Activated CD4-positive, alpha-beta memory T cell treated with anti-CD3 and anti-CD28 coated beads, Interleukin-2, amount 10 ng/mL, durations not matched to agents 7 days and 5 days (primary cell): ENCODE measurements at regions of chr12 and their contacts with region 1.

Region 1: DNA sequence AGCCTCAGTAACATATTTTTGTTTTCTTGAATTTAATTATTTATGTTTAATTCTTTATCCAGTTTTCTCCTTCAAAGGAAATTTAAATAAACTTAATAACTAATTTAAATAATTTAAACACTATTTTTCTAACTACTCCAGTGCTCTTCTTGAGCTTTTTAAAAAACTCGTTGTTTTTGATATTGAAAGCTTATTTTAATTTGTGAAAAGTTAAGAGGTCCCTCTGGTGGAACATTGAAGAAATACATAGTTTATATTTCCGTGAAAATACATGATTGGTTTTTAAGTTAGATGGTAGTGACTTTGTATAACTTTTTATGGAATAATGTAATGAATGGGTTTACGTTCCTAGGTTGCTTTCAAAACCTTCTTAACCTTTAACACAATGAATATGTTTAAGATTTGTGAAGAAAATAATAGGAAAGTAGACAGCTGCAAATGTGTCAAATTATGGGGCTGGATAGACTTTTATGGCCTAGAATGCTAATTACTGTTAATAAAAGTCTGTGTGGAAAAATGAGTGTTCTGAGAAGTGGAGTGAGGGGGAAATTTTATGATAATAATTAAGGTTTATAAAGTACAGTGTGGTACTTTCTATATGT is 45.9 kb upstream of the MSRB3 start:
- DNase-seq: no peak
- H3K4me3 Mint-ChIP-seq: no peak overlapping the region
- H3K27ac Mint-ChIP-seq: no peak overlapping the region
- H3K4me1 Mint-ChIP-seq: peaks cover 10% of the 10 kb centered on the region
- H3K27me3 Mint-ChIP-seq: no peaks in the 10 kb centered on the region

Region 2: DNA sequence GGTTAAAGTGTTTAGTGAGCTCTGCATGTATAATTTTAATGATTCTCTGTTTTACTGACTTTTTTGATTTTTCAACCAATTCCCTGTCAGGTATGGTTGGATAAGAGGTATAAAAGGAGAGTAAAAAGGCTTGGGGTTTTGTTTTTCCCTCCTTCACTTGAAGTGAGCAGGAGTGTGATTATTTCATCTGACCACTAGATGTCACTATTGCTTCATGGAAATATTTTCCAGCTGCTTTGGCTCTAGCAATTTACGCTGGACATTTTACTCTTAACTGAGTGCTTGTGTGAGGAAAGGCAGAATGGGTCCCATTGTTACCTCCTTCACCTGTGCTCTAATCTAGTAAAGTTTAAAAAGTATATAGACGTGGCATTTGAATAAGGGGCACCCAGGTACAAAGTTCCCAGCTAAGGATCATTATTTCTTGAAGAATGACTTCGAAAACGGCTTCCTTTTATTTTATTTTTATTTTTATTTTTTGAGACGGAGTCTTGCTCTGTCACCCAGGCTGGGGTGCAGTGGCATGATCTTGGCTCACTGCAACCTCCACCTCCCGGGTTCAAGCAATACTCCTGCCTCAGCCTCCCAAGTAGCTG is 341.6 kb before region 1 on chr12:
- CTCF ChIA-PET with region 1: interaction called, 12 read pairs
- POLR2A ChIA-PET with region 1: no interaction called
- DNase-seq: no peak
- H3K4me3 Mint-ChIP-seq: no peak overlapping the region
- H3K27ac Mint-ChIP-seq: no peak overlapping the region
- H3K4me1 Mint-ChIP-seq: peaks cover 1% of the 10 kb centered on the region
- H3K27me3 Mint-ChIP-seq: peaks cover 13% of the 10 kb centered on the region

Region 3: DNA sequence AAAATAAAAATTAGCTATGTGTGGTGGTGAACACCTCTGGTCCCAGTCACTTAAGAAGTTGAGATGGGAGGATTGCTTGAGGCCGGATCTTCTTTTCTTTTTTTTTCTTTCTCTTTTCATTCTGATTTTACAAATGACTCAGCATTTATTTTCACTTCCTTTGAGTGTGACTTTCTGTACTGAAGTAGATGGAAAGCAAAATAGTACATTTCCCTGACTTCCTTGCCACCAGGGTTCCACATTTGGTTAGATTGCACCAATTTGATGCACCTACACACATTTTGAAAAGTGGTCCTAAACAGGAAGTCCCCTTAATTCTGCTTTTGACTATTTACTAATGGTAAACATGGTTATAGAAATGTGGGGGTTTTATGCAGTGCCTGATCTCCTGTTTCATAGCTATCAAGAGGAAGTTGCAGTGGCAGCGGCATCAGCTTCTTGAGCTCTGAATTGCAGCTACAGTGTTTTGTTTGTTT is 76.2 kb before region 1 on chr12:
- CTCF ChIA-PET with region 1: interaction called, 10 read pairs
- POLR2A ChIA-PET with region 1: no interaction called
- DNase-seq: peak; percentile 28
- H3K4me3 Mint-ChIP-seq: peak overlapping the region; percentile 33
- H3K27ac Mint-ChIP-seq: peak overlapping the region; percentile 80
- H3K4me1 Mint-ChIP-seq: peaks cover 19% of the 10 kb centered on the region
- H3K27me3 Mint-ChIP-seq: peaks cover 19% of the 10 kb centered on the region

Region 4: DNA sequence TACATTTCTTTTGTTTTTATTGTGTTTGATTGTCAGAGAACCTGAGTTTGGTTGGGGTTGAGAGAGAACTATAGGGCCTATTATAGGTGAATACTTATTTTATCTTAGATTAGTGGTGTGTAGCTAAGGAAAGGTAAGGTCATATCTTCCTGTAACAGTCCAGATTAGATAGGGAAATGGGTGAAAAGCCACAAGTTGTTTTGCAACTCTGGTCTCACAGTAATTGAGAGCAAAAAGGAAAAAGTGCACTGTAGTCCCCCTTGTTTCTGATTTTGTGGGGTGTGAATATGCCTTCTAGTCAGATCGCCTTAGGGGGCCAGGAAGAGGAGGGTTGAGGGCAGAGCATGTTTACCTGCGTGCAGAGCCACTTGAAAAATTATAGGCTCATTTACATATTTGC is 54.8 kb after region 1 on chr12:
- CTCF ChIA-PET with region 1: no interaction called
- POLR2A ChIA-PET with region 1: no interaction called
- DNase-seq: no peak
- H3K4me3 Mint-ChIP-seq: no peak overlapping the region
- H3K27ac Mint-ChIP-seq: no peak overlapping the region
- H3K4me1 Mint-ChIP-seq: no peaks in the 10 kb centered on the region
- H3K27me3 Mint-ChIP-seq: peaks cover 21% of the 10 kb centered on the region